Activated naive CD8-positive, alpha-beta T cell treated with anti-CD3 and anti-CD28 coated beads, Interleukin-2, amount 10 ng/mL, durations not matched to agents 7 days and 5 days (primary cell): ENCODE measurements at regions of chr12 and their contacts with region 1.

Region 1: DNA sequence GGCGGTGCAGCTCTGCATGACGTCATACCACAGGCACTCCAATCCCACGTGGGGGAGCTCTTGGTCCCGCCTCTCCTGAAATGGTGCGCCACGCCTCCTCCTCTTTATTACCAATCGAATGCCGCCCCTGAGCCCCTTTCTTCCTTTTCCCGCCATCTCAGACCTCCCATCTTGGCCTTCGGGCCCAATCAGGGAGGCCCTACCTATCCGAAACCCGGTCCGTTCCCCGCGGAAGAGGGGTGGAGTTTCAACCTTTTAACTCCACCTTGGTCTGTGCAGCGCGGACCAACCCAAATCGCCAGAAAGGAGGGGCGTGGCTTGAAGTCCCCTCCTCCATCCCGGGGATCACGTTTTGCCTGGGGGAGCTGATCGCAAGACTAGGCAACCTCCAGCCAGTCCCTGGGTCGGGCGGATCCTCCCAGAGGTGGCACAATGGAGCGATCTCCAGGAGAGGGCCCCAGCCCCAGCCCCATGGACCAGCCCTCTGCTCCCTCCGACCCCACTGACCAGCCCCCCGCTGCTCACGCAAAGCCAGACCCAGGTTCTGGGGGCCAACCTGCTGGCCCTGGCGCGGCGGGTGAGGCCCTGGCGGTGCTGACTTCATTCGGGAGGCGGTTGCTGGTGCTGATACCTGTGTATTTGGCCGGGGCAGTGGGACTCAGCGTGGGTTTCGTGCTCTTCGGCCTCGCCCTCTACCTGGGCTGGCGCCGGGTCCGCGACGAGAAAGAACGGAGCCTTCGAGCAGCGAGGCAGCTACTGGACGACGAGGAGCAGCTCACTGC is at the start of gene ESYT1:
- DNase-seq: peak; percentile 91
- ATAC-seq: peak; percentile 89
- H3K4me3 Mint-ChIP-seq: peak within 1 kb of the TSS; percentile 100
- H3K27ac Mint-ChIP-seq: peak within 1 kb of the TSS; percentile 97
- H3K4me1 Mint-ChIP-seq: peaks cover 55% of the 10 kb centered on the region
- H3K27me3 Mint-ChIP-seq: no peaks in the 10 kb centered on the region
- total RNA-seq, gene ESYT1: 251 TPM

Region 2: DNA sequence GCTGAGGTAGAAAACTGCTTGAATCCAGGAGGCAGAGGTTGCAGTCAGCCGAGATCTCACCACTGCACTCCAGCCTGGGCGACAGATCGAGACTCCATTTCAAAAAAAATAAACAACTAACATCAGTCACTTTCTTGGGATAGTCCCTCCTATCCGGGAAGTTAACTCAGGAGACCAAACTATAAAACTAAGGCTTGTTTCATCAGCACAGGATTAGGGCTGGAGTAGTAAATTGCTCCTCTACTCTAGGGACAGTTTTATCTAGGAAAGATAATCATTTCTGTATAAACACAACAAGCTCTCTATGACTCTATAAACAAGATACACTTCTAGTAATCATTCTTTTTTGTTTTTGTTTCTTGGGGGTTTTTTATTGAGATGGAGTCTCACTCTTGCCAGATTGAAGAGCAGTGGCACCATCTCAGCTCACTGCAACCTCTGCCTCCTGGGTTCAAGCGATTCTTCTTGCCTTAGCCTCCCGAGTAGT is 74.6 kb before region 1 on chr12:
- POLR2A ChIA-PET with region 1: no interaction called
- DNase-seq: no peak
- ATAC-seq: no peak
- H3K4me3 Mint-ChIP-seq: no peak overlapping the region
- H3K27ac Mint-ChIP-seq: no peak overlapping the region
- H3K4me1 Mint-ChIP-seq: peaks cover 8% of the 10 kb centered on the region
- H3K27me3 Mint-ChIP-seq: no peaks in the 10 kb centered on the region

Region 3: DNA sequence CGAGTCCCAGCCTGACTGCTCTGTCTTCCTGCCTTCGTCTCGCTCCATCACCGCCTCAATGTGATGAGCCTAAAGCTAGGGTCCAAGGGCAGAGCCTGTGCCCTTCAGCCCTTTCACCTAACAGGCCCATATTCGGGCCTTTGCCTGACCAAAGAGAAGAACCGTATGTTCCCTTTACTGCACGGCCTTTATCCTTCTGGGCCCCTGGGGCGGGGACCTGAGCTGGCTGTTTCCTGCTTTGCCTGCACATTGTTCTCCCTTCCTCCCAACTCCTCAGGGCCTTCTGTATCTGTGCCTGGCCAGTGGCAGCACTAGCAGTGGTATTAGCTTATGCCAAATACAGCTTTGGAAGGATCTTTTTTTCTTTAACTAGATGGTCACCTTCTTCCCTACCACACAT is 15.8 kb after region 1 on chr12:
- POLR2A ChIA-PET with region 1: interaction called, 67 read pairs
- DNase-seq: no peak
- ATAC-seq: no peak
- H3K4me3 Mint-ChIP-seq: no peak overlapping the region
- H3K27ac Mint-ChIP-seq: peak overlapping the region; percentile 82
- H3K4me1 Mint-ChIP-seq: peaks cover 40% of the 10 kb centered on the region
- H3K27me3 Mint-ChIP-seq: no peaks in the 10 kb centered on the region

Region 4: GRCh38 chr12:56152318-56153033 is 24.4 kb after region 1 on chr12 and contains the start of gene MYL6B:
- POLR2A ChIA-PET with region 1: interaction called, 67 read pairs
- DNase-seq: peak; percentile 93
- ATAC-seq: peak; percentile 90
- H3K4me3 Mint-ChIP-seq: peak within 1 kb of the TSS; percentile 95
- H3K27ac Mint-ChIP-seq: peak within 1 kb of the TSS; percentile 100
- H3K4me1 Mint-ChIP-seq: peaks cover 36% of the 10 kb centered on the region
- H3K27me3 Mint-ChIP-seq: no peaks in the 10 kb centered on the region
- total RNA-seq, gene MYL6B: 46.6 to 47.8 TPM

Region 5: GRCh38 chr12:56158029-56158925 is 30.2 kb after region 1 on chr12 and contains the start of gene MYL6:
- POLR2A ChIA-PET with region 1: interaction called, 145 read pairs
- DNase-seq: peak; percentile 81
- ATAC-seq: peak; percentile 82
- H3K4me3 Mint-ChIP-seq: peak within 1 kb of the TSS; percentile 96
- H3K27ac Mint-ChIP-seq: peak within 1 kb of the TSS; percentile 97
- H3K4me1 Mint-ChIP-seq: peaks cover 38% of the 10 kb centered on the region
- H3K27me3 Mint-ChIP-seq: no peaks in the 10 kb centered on the region
- total RNA-seq, gene MYL6: 1,083 to 1,169 TPM

Region 6: DNA sequence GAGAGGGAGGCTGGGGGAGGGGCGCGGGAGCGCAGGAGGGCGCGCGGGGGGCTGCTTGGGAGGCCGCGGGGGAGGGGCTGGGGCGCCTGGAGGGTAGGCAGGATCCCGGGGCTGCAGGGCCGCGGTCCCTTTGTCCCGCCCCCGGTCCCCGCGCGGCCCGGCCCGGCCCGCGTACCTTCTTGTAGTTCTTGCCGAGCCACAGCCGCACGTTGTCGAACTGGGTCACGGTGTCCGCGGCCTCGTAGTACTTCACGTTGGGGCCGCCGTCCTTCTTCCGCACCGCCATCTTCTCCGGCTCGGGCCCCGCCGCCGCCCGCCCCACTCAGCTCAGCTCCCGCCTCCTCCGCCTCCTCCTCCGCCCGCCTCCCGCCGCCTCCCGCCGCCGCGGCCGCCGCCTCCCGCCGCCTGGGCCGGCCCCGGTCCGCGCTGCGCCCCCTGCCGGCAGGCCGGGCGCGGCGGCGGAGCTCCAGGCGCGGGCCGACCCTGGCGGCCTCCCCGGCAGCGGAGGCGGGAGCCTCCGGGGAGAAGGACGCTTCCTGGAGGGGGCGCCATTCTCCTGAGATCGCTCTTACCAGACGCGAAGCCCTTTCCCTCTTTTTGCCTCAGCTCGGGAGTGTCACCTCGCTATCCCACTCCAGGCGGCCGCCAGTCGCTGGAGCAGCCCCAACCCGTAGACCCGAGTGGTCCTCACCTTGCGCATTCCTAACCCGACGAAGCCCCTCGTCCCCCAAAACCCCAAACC is 61.3 kb after region 1 on chr12 and contains the start of gene SMARCC2:
- POLR2A ChIA-PET with region 1: interaction called, 86 read pairs
- DNase-seq: peak; percentile 94
- ATAC-seq: peak; percentile 87
- H3K4me3 Mint-ChIP-seq: peak within 1 kb of the TSS; percentile 99
- H3K27ac Mint-ChIP-seq: peak within 1 kb of the TSS; percentile 98
- H3K4me1 Mint-ChIP-seq: peaks cover 47% of the 10 kb centered on the region
- H3K27me3 Mint-ChIP-seq: peaks cover 2% of the 10 kb centered on the region
- total RNA-seq, gene SMARCC2: 162 to 174 TPM

Region 7: DNA sequence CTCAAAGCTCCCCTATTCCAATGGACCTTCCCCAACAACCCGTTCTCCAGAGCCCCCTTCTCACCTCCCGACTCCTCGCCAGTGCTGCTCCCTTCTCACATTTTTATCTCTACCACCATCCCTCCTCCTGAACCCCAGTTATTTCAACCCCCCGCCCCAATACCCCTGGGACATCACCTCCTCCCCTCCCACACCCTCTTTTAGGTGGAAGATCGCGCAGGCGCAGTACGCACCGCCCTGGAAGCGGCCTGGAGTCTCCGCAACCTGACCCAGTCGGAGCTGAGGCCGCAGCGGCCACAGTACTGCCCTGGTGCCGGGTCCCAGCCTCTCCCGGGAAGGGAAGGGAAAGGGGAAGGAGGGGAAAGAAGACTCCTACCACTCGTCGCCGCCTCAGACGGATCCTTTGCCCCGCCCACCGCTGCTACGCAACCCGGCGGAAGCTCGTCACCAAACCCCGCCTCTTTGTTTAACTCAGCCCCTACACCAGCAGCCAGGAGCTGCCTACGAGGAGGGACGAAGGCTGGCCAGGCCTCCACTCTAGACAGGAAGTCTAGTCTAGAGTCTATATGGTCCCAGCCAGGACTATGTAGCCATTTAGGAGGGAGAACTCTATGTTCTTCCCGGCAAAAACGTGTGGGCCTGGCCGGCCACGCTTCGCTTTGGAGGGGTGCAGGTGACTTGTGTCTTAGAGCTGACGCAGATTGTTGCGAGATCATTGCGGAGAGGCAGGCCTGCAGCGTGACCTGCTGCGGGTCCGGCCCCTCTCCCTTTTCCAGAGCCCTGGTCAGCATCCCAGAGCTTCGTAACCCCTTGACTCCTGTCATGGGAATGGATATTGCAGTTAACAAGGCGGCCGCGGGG is 93.7 kb after region 1 on chr12 and contains the start of gene RNF41:
- POLR2A ChIA-PET with region 1: interaction called, 13 read pairs
- DNase-seq: peak; percentile 92
- ATAC-seq: peak; percentile 83
- H3K4me3 Mint-ChIP-seq: peak within 1 kb of the TSS; percentile 96
- H3K27ac Mint-ChIP-seq: peak within 1 kb of the TSS; percentile 91
- H3K4me1 Mint-ChIP-seq: peaks cover 34% of the 10 kb centered on the region
- H3K27me3 Mint-ChIP-seq: no peaks in the 10 kb centered on the region
- total RNA-seq, gene RNF41: 36.1 to 38.1 TPM